Aorta (tissue), 5 donors: ENCODE measurements at regions of chr10 and their contacts with region 1.

Region 1: DNA sequence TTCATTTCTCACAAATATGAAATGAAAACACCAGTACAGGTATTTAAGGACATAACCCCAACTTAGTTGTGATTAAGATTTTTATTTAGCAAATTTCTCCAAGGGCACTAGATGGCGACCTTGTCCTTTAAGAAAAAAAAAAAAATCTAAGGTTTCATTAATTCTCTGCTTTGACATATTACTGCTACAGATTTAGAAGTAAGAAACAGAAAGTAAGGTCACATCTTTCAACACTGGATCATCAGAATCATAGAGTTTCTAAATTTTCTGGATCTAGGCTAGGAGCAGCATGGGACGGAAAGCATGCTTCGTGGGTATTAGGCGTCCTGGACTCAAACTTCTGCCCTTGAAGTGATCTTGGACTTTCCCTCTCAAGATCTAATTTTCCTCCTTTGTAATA is 85.5 kb upstream of the PRKG1 start:
- DNase-seq: no peak
- ATAC-seq: no peak
- H3K4me3 ChIP-seq: peak overlapping the region; percentile 37 to 92
- H3K27ac ChIP-seq: no peak overlapping the region
- H3K4me1 ChIP-seq: no peaks in the 10 kb centered on the region
- H3K27me3 ChIP-seq: no peaks in the 10 kb centered on the region

Region 2: GRCh38 chr10:51706225-51706624 is 717.4 kb after region 1 on chr10:
- intact Hi-C with region 1: loop called in 1 of 2 experiments (anchors 5 kb)
- DNase-seq: peak; percentile 87 to 92
- ATAC-seq: peak; percentile 90
- H3K4me3 ChIP-seq: no peak overlapping the region
- H3K27ac ChIP-seq: peak overlapping the region in 1 of 2 donors; percentile 86
- H3K4me1 ChIP-seq: peaks cover 7 to 11% of the 10 kb centered on the region in 2 donors
- H3K27me3 ChIP-seq: no peaks in the 10 kb centered on the region